CD8-positive, alpha-beta T cell (primary cell): ENCODE measurements at regions of chr3 and their contacts with region 1.

Region 1: GRCh38 chr3:50611464-50612233 is at the start of gene CISH:
- DNase-seq: peak; percentile 75 to 94 (median 90)
- ATAC-seq: peak; percentile 64
- H3K4me3 ChIP-seq: peak within 1 kb of the TSS; percentile 89 to 95
- H3K4me3 Mint-ChIP-seq: peak within 1 kb of the TSS; percentile 97
- H3K27ac ChIP-seq: peak within 1 kb of the TSS; percentile 57 to 87
- H3K27ac Mint-ChIP-seq: peak within 1 kb of the TSS; percentile 92
- H3K4me1 ChIP-seq: peaks cover 58% of the 10 kb centered on the region
- H3K4me1 Mint-ChIP-seq: peaks cover 67% of the 10 kb centered on the region
- H3K27me3 ChIP-seq: no peaks in the 10 kb centered on the region
- H3K27me3 Mint-ChIP-seq: no peaks in the 10 kb centered on the region
- CTCF ChIP-seq: no peak
- total RNA-seq, gene CISH: 4.7 to 5.6 TPM

Region 2: DNA sequence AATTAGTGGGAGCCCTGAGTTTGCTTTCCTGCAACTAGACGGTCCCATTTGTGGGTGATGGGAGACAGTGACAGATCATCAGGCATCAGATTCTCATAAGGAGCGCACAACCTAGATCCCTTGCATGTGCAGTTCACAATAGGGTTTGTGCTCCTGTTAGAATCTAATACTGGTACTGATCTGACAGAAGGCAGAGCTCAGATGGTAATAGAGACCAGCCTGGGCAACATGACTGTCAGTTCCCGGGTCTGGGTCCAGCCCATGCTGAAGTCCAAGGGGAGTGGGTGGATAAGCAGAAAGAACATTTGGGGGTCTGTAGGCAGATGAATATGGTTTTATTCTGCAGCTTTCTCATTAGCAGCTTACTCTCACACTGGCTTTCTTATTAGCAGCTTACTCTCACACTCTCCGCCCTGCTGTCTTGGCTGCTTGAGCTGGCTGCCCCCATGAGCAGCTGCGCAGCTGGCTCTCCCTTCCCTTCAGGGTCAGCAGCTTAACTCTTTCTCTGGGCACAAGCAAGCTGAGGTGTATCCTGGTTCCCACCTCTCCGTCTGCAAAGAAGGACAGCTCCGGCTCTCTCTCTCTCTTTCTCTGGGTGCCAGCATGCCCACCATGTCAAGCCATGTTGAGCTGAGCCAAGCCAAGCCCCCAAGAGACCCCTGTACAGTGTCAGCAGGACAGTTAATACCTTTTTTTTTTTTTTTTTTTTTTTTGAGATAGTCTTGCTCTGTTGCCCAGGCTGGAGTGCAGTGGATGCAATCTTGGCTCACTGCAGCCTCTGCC is 1393.8 kb before region 1 on chr3:
- CTCF ChIA-PET with region 1: no interaction called
- POLR2A ChIA-PET with region 1: no interaction called
- intact Hi-C with region 1: no loop called
- DNase-seq: no peak
- ATAC-seq: no peak
- H3K4me3 ChIP-seq: no peak overlapping the region
- H3K4me3 Mint-ChIP-seq: no peak overlapping the region
- H3K27ac ChIP-seq: no peak overlapping the region
- H3K27ac Mint-ChIP-seq: no peak overlapping the region
- H3K4me1 ChIP-seq: no peaks in the 10 kb centered on the region
- H3K4me1 Mint-ChIP-seq: no peaks in the 10 kb centered on the region
- H3K27me3 ChIP-seq: no peaks in the 10 kb centered on the region
- H3K27me3 Mint-ChIP-seq: peaks cover 9% of the 10 kb centered on the region
- CTCF ChIP-seq: no peak

Region 3: DNA sequence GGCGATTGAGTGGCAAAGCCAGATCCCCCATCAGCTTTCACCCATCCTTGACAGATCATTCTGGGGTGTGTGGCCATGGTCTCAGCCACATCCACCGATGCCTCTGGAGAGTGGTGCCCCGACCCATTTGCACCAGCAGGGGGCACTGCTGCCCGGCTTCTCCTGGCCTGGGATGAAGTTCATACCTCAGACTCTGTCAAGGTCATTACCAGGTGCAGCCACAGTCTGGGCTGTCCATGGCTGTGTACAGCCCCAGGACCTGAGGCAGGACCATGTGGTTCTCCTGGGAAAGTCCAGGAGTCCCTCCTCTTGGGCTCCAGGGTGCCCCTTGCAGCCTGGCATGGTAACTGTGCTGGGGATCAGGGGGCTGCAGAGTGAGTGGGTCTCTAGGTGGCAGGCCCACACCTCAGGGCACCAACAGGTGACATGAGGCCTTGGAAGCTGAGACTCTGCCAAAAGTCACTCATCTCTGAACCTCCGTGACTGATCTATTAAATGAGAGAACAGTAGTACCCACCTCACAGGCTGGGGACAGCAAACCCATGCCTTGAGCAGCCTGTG is 175.5 kb before region 1 on chr3:
- CTCF ChIA-PET with region 1: interaction called, 3 read pairs
- POLR2A ChIA-PET with region 1: no interaction called
- intact Hi-C with region 1: loop called in 1 of 2 experiments (anchors 1 kb)
- DNase-seq: peak; percentile 62 to 89 (median 80)
- ATAC-seq: peak; percentile 98
- H3K4me3 ChIP-seq: no peak overlapping the region
- H3K4me3 Mint-ChIP-seq: no peak overlapping the region
- H3K27ac ChIP-seq: no peak overlapping the region
- H3K27ac Mint-ChIP-seq: no peak overlapping the region
- H3K4me1 ChIP-seq: peaks cover 7% of the 10 kb centered on the region
- H3K4me1 Mint-ChIP-seq: peaks cover 4% of the 10 kb centered on the region
- H3K27me3 ChIP-seq: no peaks in the 10 kb centered on the region
- H3K27me3 Mint-ChIP-seq: no peaks in the 10 kb centered on the region
- CTCF ChIP-seq: peak; percentile 87

Region 4: DNA sequence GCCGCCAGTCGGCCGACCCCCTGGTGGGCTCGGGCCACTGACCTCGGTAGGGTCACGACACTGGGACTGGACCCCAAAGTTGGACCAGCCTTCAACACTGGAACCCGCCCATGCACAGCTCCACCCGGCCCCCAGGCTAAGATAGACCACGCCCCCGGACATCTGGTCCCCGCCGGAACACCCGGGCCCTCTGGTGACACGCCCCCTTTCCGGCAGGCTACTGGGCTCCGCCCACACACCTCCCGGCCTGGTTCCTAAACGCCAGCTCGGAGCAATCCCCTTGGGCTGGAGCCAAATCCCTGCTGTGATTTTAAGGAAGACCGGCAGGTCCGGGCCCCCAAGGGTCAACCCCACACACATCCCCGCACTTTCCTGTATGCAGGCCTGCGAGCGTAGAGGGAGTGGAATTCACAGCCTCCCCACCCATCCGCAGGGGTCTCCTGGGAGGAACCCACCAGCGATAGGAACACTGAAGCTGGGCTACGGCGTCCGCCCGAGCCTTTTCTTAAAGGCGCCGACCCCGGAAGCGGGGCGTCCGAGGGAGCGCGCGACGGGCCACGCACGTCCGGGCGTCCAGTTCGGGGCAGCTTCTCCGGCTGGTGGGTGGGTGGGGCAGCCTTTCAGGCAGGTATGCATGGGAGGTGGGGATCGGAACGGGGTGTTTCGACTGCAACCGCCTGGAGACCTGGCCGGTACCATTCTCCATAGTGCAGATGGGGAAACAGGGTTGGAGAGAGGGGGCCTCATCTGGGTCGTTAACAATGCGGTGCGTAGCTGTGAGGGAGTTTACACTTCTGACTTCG is 42.5 kb before region 1 on chr3 and contains the start of gene HEMK1:
- CTCF ChIA-PET with region 1: interaction called, 968 read pairs
- POLR2A ChIA-PET with region 1: interaction called, 301 read pairs
- intact Hi-C with region 1: loop called (anchors 1 kb)
- DNase-seq: peak; percentile 83 to 96 (median 94)
- ATAC-seq: peak; percentile 70
- H3K4me3 ChIP-seq: peak within 1 kb of the TSS; percentile 89 to 94
- H3K4me3 Mint-ChIP-seq: peak within 1 kb of the TSS; percentile 94
- H3K27ac ChIP-seq: peak within 1 kb of the TSS; percentile 83 to 89
- H3K27ac Mint-ChIP-seq: peak within 1 kb of the TSS; percentile 97
- H3K4me1 ChIP-seq: peaks cover 68% of the 10 kb centered on the region
- H3K4me1 Mint-ChIP-seq: peaks cover 67% of the 10 kb centered on the region
- H3K27me3 ChIP-seq: no peaks in the 10 kb centered on the region
- H3K27me3 Mint-ChIP-seq: no peaks in the 10 kb centered on the region
- CTCF ChIP-seq: no peak
- total RNA-seq, gene HEMK1: 11.1 to 12.5 TPM

Region 5: GRCh38 chr3:50652709-50653108 is 41.1 kb after region 1 on chr3:
- CTCF ChIA-PET with region 1: interaction called, 244 read pairs
- POLR2A ChIA-PET with region 1: interaction called, 20 read pairs
- intact Hi-C with region 1: loop called (anchors 1 kb)
- DNase-seq: peak in 8 of 9 experiments; percentile 29 to 72 (median 54)
- ATAC-seq: peak; percentile 61
- H3K4me3 ChIP-seq: no peak overlapping the region
- H3K4me3 Mint-ChIP-seq: no peak overlapping the region
- H3K27ac ChIP-seq: no peak overlapping the region
- H3K27ac Mint-ChIP-seq: peak overlapping the region; percentile 52
- H3K4me1 ChIP-seq: no peaks in the 10 kb centered on the region
- H3K4me1 Mint-ChIP-seq: peaks cover 1% of the 10 kb centered on the region
- H3K27me3 ChIP-seq: no peaks in the 10 kb centered on the region
- H3K27me3 Mint-ChIP-seq: no peaks in the 10 kb centered on the region
- CTCF ChIP-seq: peak; percentile 42

Region 6: GRCh38 chr3:50724831-50725230 is 113.2 kb after region 1 on chr3:
- CTCF ChIA-PET with region 1: no interaction called
- POLR2A ChIA-PET with region 1: no interaction called
- intact Hi-C with region 1: no loop called
- DNase-seq: no peak
- ATAC-seq: no peak
- H3K4me3 ChIP-seq: no peak overlapping the region
- H3K4me3 Mint-ChIP-seq: no peak overlapping the region
- H3K27ac ChIP-seq: no peak overlapping the region
- H3K27ac Mint-ChIP-seq: no peak overlapping the region
- H3K4me1 ChIP-seq: no peaks in the 10 kb centered on the region
- H3K4me1 Mint-ChIP-seq: no peaks in the 10 kb centered on the region
- H3K27me3 ChIP-seq: no peaks in the 10 kb centered on the region
- H3K27me3 Mint-ChIP-seq: peaks cover 14% of the 10 kb centered on the region
- CTCF ChIP-seq: no peak

Region 7: GRCh38 chr3:51275111-51275805 is 663.6 kb after region 1 on chr3:
- CTCF ChIA-PET with region 1: interaction called, 5 read pairs
- POLR2A ChIA-PET with region 1: no interaction called
- intact Hi-C with region 1: loop called in 1 of 2 experiments (anchors 1 kb)
- DNase-seq: no peak
- ATAC-seq: no peak
- H3K4me3 ChIP-seq: no peak overlapping the region
- H3K4me3 Mint-ChIP-seq: no peak overlapping the region
- H3K27ac ChIP-seq: no peak overlapping the region
- H3K27ac Mint-ChIP-seq: peak overlapping the region; percentile 83
- H3K4me1 ChIP-seq: peaks cover 29% of the 10 kb centered on the region
- H3K4me1 Mint-ChIP-seq: peaks cover 49% of the 10 kb centered on the region
- H3K27me3 ChIP-seq: no peaks in the 10 kb centered on the region
- H3K27me3 Mint-ChIP-seq: no peaks in the 10 kb centered on the region
- CTCF ChIP-seq: no peak

Region 8: DNA sequence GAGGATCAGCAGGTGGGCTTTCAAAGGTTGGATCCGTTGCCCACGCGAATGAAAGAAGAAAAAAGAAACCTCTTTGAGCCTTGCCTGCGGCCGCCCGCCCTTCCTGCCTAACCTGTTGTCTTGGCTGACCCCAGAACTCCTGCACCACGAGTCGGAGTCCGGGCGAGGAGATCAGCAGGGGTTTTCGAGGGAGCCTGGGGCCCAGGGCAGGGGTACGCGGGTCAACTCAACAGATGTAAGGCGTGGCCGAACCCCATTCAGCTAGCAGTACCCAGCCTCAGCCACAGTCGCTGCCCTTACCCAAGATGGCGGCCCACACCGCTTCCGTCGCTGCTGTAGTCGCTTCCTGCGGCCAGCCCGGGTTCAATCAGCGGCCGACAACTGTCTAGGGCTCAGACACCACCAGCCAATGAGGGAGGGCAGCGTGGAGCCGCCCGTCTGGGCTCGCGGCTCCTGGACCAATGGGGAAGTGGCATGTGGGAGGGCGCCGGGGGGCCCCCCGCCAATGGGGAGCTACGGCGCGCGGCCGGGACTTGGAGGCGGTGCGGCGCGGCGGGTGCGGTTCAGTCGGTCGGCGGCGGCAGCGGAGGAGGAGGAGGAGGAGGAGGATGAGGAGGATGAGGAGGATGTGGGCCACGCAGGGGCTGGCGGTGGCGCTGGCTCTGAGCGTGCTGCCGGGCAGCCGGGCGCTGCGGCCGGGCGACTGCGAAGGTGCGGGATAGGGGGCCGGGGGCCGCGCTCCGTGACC is 773.3 kb after region 1 on chr3 and contains the start of gene MANF:
- CTCF ChIA-PET with region 1: interaction called, 31 read pairs
- POLR2A ChIA-PET with region 1: interaction called, 5 read pairs
- intact Hi-C with region 1: loop called (anchors 1 to 2 kb)
- DNase-seq: peak; percentile 94 to 99 (median 97)
- ATAC-seq: peak; percentile 93
- H3K4me3 ChIP-seq: peak within 1 kb of the TSS; percentile 86 to 94
- H3K4me3 Mint-ChIP-seq: peak within 1 kb of the TSS; percentile 99
- H3K27ac ChIP-seq: peak within 1 kb of the TSS; percentile 90 to 93
- H3K27ac Mint-ChIP-seq: peak within 1 kb of the TSS; percentile 100
- H3K4me1 ChIP-seq: peaks cover 35% of the 10 kb centered on the region
- H3K4me1 Mint-ChIP-seq: peaks cover 44% of the 10 kb centered on the region
- H3K27me3 ChIP-seq: no peaks in the 10 kb centered on the region
- H3K27me3 Mint-ChIP-seq: no peaks in the 10 kb centered on the region
- CTCF ChIP-seq: no peak
- total RNA-seq, gene MANF: 32.2 to 35.0 TPM

Region 9: GRCh38 chr3:51670823-51671733 is 1059.4 kb after region 1 on chr3 and contains the start of gene TEX264:
- CTCF ChIA-PET with region 1: no interaction called
- POLR2A ChIA-PET with region 1: no interaction called
- intact Hi-C with region 1: loop called (anchors 1 to 2 kb)
- DNase-seq: peak; percentile 85 to 99 (median 95)
- ATAC-seq: peak; percentile 78
- H3K4me3 ChIP-seq: peak within 1 kb of the TSS; percentile 95 to 99
- H3K4me3 Mint-ChIP-seq: peak within 1 kb of the TSS; percentile 89
- H3K27ac ChIP-seq: peak within 1 kb of the TSS; percentile 67 to 92
- H3K27ac Mint-ChIP-seq: peak within 1 kb of the TSS; percentile 88
- H3K4me1 ChIP-seq: peaks cover 58% of the 10 kb centered on the region
- H3K4me1 Mint-ChIP-seq: peaks cover 63% of the 10 kb centered on the region
- H3K27me3 ChIP-seq: no peaks in the 10 kb centered on the region
- H3K27me3 Mint-ChIP-seq: no peaks in the 10 kb centered on the region
- CTCF ChIP-seq: no peak
- total RNA-seq, gene TEX264: 18.7 to 21.0 TPM